ENCODE measurements at regions of chr5 and their contacts with region 1.

Region 1: GRCh38 chr5:151847871-151848270 is 76.1 kb downstream of the G3BP1 start:
- DNase-seq: no peak
- H3K4me3 ChIP-seq: no peak overlapping the region
- H3K27ac ChIP-seq: no peak overlapping the region
- H3K4me1 ChIP-seq: no peaks in the 10 kb centered on the region
- H3K27me3 ChIP-seq: no peaks in the 10 kb centered on the region
- CTCF ChIP-seq: no peak
- POLR2A ChIP-seq: no peak

Region 2: DNA sequence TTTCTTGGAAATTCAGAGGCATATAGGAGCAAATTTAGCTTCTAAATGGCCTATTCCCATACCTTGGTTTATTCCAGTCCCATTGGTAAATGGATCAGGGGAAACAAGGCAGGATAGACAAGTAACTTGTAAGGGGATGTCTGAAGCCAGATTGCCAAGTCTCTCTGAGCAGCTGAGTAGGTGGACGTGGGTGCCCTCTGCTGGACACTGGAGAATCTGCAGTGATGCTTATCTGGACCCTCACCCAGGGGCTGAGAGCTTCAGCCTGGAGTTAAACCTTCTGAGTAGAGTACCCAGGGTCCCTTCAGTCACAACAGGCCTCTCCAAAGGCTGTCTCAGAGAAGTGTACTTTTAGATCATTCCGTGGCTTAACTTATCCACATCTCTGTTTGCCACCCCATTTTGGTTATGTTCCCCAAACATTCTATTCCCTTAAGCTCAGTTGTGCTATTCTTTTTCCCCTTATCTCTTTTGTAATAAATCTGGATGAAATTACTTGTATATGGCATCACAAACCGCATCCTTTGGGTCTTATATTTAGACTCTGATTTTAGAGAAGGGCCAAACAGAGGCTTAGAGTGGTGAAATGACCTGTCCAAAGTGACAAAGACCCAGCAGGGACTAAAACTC is 295.1 kb after region 1 on chr5:
- CTCF ChIA-PET with region 1: no interaction called
- POLR2A ChIA-PET with region 1: no interaction called
- dilution Hi-C with region 1: no loop called
- intact Hi-C with region 1: loop called (anchors 5 kb)
- DNase-seq: peak; percentile 47
- H3K4me3 ChIP-seq: no peak overlapping the region
- H3K27ac ChIP-seq: no peak overlapping the region
- H3K4me1 ChIP-seq: no peaks in the 10 kb centered on the region
- H3K27me3 ChIP-seq: no peaks in the 10 kb centered on the region
- CTCF ChIP-seq: peak; percentile 76 to 94
- POLR2A ChIP-seq: no peak

Measured in endothelial cell of umbilical vein (primary cell).